ENCODE measurements at regions of chr18 and their contacts with region 1.

Region 1: DNA sequence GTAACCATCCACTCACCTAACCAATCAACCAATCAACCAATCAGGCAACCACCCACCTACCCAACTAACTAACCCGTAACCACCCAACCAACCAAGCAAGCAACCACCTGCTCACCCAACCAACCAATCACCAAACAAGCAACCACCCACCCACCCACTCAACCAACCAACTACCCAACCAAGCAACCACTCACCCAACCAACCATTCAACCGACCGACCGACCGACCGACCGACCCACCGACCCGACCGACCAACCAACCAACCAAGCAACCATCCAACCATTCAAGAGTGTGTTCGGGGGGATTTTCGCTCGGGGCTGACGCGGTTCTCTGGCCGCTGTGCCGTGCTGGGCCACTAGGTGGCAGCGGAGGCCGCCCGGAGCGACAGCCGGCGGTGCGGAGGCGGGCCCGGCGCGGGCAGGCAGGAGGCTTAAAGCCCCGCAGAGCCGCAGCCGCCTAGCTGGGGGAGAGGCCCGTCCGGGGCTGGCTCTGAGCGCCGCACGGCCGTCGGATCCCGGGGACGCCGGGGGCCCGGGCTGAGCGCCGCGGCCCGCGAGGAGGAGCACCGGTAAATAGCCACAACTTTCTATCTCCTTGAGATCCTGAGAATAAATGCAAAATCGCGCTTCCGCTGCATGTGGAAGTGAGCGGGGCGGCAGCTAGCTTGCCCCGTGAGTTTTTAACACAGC is at the start of gene MC5R:
- DNase-seq: no peak
- ATAC-seq: peak; percentile 98
- H3K4me3 ChIP-seq: no peak within 1 kb of the TSS; the same call in 1 of the 2 replicates
- H3K27ac ChIP-seq: no peak within 1 kb of the TSS
- H3K4me1 ChIP-seq: no peaks in the 10 kb centered on the region
- H3K27me3 ChIP-seq: no peaks in the 10 kb centered on the region
- CTCF ChIP-seq: peak; percentile 90 to 96 (median 94)
- EP300 ChIP-seq: no peak
- POLR2A ChIP-seq: no peak
- RAD21 ChIP-seq: peak; percentile 83
- polyA plus RNA-seq, gene MC5R: not detected

Region 2: DNA sequence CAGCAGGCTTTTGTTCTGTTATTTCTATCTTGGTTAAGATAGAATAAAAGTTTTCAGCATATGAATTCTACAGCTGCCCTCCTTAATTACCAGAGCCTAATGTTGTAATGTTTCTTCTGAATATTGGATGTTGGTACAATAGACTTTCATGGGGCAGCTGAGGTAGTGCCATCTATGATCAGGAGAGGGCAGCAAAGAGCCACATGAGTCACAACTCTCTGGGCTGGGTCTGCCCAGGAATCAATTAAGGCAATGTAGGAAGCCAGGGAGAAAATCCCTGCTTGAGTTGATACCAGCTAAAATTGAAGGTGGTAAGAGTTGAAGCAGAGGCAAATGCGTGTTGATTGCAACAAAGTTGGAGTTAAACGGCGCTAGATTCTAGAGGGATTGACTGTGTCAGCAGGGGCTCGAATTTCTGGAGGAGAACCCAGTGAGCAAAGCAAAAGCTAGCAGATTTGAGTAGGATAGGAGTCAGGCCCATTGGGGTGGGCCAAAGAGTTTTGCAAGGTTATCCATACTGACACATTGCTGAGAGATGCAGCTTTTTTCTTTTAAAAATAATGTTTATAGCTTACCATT is 10.5 kb before region 1 on chr18:
- CTCF ChIA-PET with region 1: interaction called, 19 read pairs
- POLR2A ChIA-PET with region 1: no interaction called
- RAD21 ChIA-PET with region 1: interaction called, 9 read pairs
- SMC1A ChIA-PET with region 1: interaction called, 7 read pairs
- in situ Hi-C with region 1: no loop called
- intact Hi-C with region 1: no loop called
- DNase-seq: no peak
- ATAC-seq: peak; percentile 98
- H3K4me3 ChIP-seq: no peak overlapping the region
- H3K27ac ChIP-seq: no peak overlapping the region
- H3K4me1 ChIP-seq: no peaks in the 10 kb centered on the region
- H3K27me3 ChIP-seq: peaks cover 2 to 3% of the 10 kb centered on the region in 2 experiments; a peak in 3 of 4 replicates
- CTCF ChIP-seq: peak; percentile 79 to 89 (median 80)
- EP300 ChIP-seq: no peak
- POLR2A ChIP-seq: no peak
- RAD21 ChIP-seq: peak; percentile 63

Region 3: GRCh38 chr18:13868501-13869271 is 44.8 kb after region 1 on chr18:
- CTCF ChIA-PET with region 1: no interaction called
- POLR2A ChIA-PET with region 1: no interaction called
- RAD21 ChIA-PET with region 1: no interaction called
- SMC1A ChIA-PET with region 1: no interaction called
- in situ Hi-C with region 1: no loop called
- intact Hi-C with region 1: no loop called
- DNase-seq: no peak
- ATAC-seq: no peak
- H3K4me3 ChIP-seq: no peak overlapping the region
- H3K27ac ChIP-seq: no peak overlapping the region
- H3K4me1 ChIP-seq: no peaks in the 10 kb centered on the region
- H3K27me3 ChIP-seq: peaks cover 1 to 19% of the 10 kb centered on the region in 2 experiments; a peak in 3 of 4 replicates
- CTCF ChIP-seq: no peak
- EP300 ChIP-seq: no peak
- POLR2A ChIP-seq: no peak
- RAD21 ChIP-seq: no peak

Region 4: GRCh38 chr18:13934676-13935075 is 110.8 kb after region 1 on chr18:
- CTCF ChIA-PET with region 1: no interaction called
- POLR2A ChIA-PET with region 1: no interaction called
- RAD21 ChIA-PET with region 1: no interaction called
- SMC1A ChIA-PET with region 1: no interaction called
- in situ Hi-C with region 1: no loop called
- intact Hi-C with region 1: no loop called
- DNase-seq: no peak
- ATAC-seq: 0 out of 3 replicates have a peak, but pooled peaks have one; percentile 27
- H3K4me3 ChIP-seq: no peak overlapping the region
- H3K27ac ChIP-seq: no peak overlapping the region
- H3K4me1 ChIP-seq: no peaks in the 10 kb centered on the region
- H3K27me3 ChIP-seq: no peaks in the 10 kb centered on the region; a peak in 2 of 4 replicates
- CTCF ChIP-seq: no peak
- EP300 ChIP-seq: no peak
- POLR2A ChIP-seq: no peak
- RAD21 ChIP-seq: no peak